ENCODE measurements at regions of chr3 and their contacts with region 1.

Region 1: DNA sequence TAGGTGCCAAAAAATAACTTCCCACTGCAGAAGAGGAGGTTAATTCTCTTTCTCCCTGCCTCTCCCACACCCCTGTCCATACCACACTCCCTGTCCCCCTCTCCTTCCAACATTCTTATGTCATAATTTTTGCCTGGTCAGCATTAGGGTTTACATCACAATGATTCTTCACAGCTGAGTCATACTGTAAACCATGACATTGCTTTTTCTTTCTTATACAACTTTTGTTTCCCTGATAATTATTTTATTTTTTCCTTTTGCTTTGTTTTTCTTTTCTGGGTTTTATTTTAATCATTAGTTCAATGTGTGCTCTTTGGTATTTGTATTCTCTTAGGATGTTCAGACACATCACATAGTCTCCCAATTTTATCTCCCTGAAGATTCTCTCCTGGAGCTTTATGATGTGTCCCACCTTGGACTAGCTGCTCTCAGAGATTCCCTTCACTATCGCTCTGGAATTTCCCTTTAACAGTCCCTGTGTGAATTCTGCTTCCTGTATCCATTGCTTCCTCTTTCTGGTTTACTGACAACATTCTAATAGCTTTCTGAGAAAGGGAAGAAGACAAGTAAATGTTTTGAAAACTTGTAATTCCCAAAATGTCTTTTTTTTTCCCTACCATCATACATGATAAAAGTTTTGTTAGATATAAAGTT is 70.7 kb downstream of the SOX2 start:
- DNase-seq: peak; percentile 36
- H3K4me3 ChIP-seq: no peak overlapping the region
- CTCF ChIP-seq: no peak

Region 2: DNA sequence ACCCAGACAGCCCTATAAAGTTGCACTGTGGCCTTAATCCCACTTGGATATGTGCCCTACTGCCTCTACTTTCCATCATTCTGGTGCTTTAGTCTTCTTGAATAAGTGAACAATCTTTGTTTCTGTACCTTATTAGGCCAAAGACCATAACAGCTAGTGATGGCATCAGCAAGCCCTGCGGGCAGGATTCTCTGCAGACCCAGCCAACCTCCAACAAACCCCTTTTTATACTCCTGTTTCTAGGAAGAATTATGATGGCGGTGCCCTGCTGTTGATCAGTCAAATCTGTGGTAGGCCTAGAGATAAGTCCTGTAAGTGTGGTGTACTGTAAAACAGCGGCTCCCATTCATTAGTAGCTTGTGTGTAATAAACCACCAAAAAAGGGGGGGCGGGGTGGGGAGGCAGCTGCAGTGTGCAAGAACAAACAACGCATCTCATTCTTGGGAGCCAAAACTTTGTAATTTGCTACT is 30.2 kb before region 1 on chr3:
- in situ Hi-C with region 1: loop called (anchors 5 kb)
- DNase-seq: peak; percentile 16
- H3K4me3 ChIP-seq: no peak overlapping the region
- CTCF ChIP-seq: no peak

Measured in astrocyte of the cerebellum (primary cell).